ENCODE measurements at regions of chr16 and their contacts with region 1.

Region 1: DNA sequence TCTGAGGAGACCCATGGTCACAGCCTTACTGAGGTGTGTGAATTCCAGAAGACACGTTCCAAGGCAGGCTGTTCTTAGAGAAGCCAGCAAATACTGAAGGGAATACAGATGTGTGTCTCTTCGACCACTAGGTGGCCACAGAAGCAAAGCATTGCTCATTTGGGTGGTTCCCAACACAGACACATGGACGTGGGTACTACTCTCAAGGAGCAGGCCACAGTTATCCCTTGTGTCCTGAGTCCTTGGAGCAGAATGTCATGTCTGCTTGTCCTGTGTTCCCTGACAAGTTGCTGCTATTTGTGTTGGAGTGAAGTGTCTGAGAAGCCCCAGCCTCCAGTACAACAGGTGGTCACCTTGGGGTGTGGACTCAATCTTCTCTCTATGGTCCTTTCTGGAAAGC is 30.3 kb downstream of the HMOX2 start:
- DNase-seq: peak; percentile 66 to 73 (median 68)
- H3K4me3 ChIP-seq: peak overlapping the region in 1 of 2 donors; percentile 57
- H3K4me3 Mint-ChIP-seq: peak overlapping the region; percentile 49 to 94 (median 80)
- H3K27ac ChIP-seq: peak overlapping the region; percentile 77
- H3K27ac Mint-ChIP-seq: peak overlapping the region; percentile 96 to 100 (median 99)
- H3K4me1 ChIP-seq: peaks cover 67% of the 10 kb centered on the region
- H3K4me1 Mint-ChIP-seq: peaks cover 40 to 77% (median 60%) of the 10 kb centered on the region in 4 donors
- H3K27me3 ChIP-seq: no peaks in the 10 kb centered on the region
- H3K27me3 Mint-ChIP-seq: no peaks in the 10 kb centered on the region

Region 2: DNA sequence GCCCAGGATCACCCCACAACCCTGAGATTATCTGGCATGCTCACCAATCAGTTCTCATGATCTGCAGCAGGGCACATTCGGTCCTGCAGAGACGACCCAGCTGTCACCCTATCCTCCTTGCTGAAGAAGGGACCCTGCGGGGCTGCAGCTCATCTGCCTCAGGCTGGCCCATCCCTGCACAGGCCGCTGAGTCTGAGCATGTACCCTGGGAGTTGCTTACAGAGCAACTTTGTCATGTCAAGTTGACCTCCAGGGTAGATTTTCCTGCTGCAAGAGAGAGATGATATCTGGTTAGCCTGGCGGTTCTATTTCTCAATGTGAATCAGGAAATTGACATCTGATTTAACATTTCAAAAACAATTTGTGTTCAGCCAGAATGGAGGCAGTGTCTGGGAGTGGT is 354.2 kb before region 1 on chr16:
- CTCF ChIA-PET with region 1: no interaction called
- POLR2A ChIA-PET with region 1: no interaction called
- intact Hi-C with region 1: no loop called
- DNase-seq: no peak
- H3K4me3 ChIP-seq: no peak overlapping the region
- H3K4me3 Mint-ChIP-seq: no peak overlapping the region
- H3K27ac ChIP-seq: no peak overlapping the region
- H3K27ac Mint-ChIP-seq: no peak overlapping the region
- H3K4me1 ChIP-seq: no peaks in the 10 kb centered on the region
- H3K4me1 Mint-ChIP-seq: no peaks in the 10 kb centered on the region
- H3K27me3 ChIP-seq: no peaks in the 10 kb centered on the region
- H3K27me3 Mint-ChIP-seq: no peaks in the 10 kb centered on the region

Region 3: DNA sequence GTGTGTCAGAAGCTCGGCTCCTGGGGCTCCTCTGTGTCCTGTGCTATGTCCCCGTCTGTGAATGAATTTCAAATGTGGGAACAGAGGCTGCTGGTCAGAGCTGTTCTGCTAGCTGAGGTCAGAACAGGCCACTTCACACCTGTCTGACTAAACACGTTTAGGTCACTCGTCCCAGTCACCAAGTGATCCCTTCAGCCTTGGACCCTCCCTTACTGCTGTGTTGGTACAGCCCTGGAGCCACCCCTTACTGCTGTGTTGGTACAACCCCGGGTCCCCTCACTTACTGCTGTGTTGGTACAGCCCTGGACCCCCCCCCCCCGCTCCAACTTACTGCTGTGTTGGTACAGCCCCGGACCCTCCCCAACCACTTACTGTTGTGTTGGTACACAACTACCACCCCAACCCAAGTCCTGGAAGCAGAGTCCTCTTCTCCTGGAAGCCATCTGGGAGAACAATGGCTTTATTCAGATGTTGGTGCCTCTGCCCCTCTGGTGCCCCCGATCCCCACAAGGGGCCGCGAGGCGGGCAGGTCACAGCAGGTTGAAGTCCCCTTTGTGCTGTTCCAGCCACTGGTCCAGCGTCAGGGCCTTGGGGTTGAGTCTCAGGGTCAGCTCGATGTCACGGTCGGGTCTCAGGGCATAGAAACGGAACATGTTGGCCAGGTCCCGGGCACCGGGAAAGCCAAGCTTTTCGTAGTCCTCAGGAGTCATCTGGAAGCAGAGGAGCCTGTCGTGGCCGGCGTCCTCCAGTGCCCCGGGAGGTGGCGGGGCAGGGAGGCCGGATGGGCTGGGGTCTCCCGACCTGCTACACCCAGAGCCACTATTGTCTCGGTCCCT is 45.0 kb before region 1 on chr16:
- CTCF ChIA-PET with region 1: interaction called, 11 read pairs
- POLR2A ChIA-PET with region 1: interaction called, 24 read pairs
- intact Hi-C with region 1: no loop called
- DNase-seq: no peak
- H3K4me3 ChIP-seq: no peak overlapping the region
- H3K4me3 Mint-ChIP-seq: no peak overlapping the region
- H3K27ac ChIP-seq: no peak overlapping the region
- H3K27ac Mint-ChIP-seq: peak overlapping the region in 4 of 7 donors; percentile 42 to 85 (median 54)
- H3K4me1 ChIP-seq: peaks cover 31% of the 10 kb centered on the region
- H3K4me1 Mint-ChIP-seq: peaks cover 21 to 43% (median 21%) of the 10 kb centered on the region in 4 donors
- H3K27me3 ChIP-seq: no peaks in the 10 kb centered on the region
- H3K27me3 Mint-ChIP-seq: no peaks in the 10 kb centered on the region

Region 4: DNA sequence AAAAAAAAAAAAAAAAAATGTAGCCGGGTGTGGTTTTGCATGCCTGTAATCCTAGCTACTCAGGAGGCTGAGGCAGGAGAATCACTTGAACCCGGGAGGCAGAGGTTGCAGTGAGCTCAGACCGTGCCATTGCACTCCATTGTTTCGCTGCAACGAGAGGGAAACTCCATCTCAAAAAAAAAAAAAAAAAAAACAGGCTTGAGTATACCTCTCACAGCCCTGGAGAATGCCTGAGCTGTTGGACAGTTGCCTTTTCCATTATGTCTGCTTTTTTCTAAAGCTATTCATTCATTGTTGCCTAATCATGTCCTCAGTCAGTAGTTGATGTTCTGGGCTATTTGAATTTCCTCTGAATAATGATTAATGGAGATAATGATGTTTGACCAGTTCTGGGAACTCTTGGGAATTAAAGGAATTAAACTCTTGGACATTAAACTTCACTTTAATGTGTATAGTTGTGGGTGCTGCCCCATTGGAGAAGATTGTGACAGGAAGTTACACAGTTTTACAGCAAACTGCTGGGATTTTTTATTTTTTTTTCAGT is 18.4 kb before region 1 on chr16:
- CTCF ChIA-PET with region 1: interaction called, 343 read pairs
- POLR2A ChIA-PET with region 1: interaction called, 150 read pairs
- intact Hi-C with region 1: loop called (anchors 1 kb)
- DNase-seq: peak in 3 of 5 donors; percentile 40 to 54 (median 42)
- H3K4me3 ChIP-seq: peak overlapping the region in 1 of 2 donors; percentile 33
- H3K4me3 Mint-ChIP-seq: peak overlapping the region; percentile 56 to 91 (median 81)
- H3K27ac ChIP-seq: peak overlapping the region; percentile 50
- H3K27ac Mint-ChIP-seq: peak overlapping the region; percentile 81 to 98 (median 97)
- H3K4me1 ChIP-seq: peaks cover 84% of the 10 kb centered on the region
- H3K4me1 Mint-ChIP-seq: peaks cover 36 to 70% (median 57%) of the 10 kb centered on the region in 4 donors
- H3K27me3 ChIP-seq: no peaks in the 10 kb centered on the region
- H3K27me3 Mint-ChIP-seq: no peaks in the 10 kb centered on the region

Region 5: GRCh38 chr16:4550591-4550990 is 44.1 kb after region 1 on chr16:
- CTCF ChIA-PET with region 1: interaction called, 203 read pairs
- POLR2A ChIA-PET with region 1: interaction called, 10 read pairs
- intact Hi-C with region 1: loop called (anchors 1 kb)
- DNase-seq: no peak
- H3K4me3 ChIP-seq: no peak overlapping the region
- H3K4me3 Mint-ChIP-seq: no peak overlapping the region
- H3K27ac ChIP-seq: no peak overlapping the region
- H3K27ac Mint-ChIP-seq: peak overlapping the region in 2 of 7 donors; percentile 46 to 88
- H3K4me1 ChIP-seq: peaks cover 6% of the 10 kb centered on the region
- H3K4me1 Mint-ChIP-seq: peaks cover 4 to 7% (median 5%) of the 10 kb centered on the region in 4 donors
- H3K27me3 ChIP-seq: no peaks in the 10 kb centered on the region
- H3K27me3 Mint-ChIP-seq: no peaks in the 10 kb centered on the region

Region 6: GRCh38 chr16:4616047-4616811 is 109.8 kb after region 1 on chr16:
- CTCF ChIA-PET with region 1: interaction called, 8 read pairs
- POLR2A ChIA-PET with region 1: interaction called, 17 read pairs
- intact Hi-C with region 1: loop called (anchors 2 kb)
- DNase-seq: peak; percentile 98 to 100 (median 99)
- H3K4me3 ChIP-seq: peak overlapping the region; percentile 65 to 79
- H3K4me3 Mint-ChIP-seq: peak overlapping the region; percentile 94 to 97 (median 95)
- H3K27ac ChIP-seq: peak overlapping the region; percentile 89
- H3K27ac Mint-ChIP-seq: peak overlapping the region; percentile 95 to 100 (median 99)
- H3K4me1 ChIP-seq: peaks cover 43% of the 10 kb centered on the region
- H3K4me1 Mint-ChIP-seq: peaks cover 5 to 39% (median 25%) of the 10 kb centered on the region in 4 donors
- H3K27me3 ChIP-seq: no peaks in the 10 kb centered on the region
- H3K27me3 Mint-ChIP-seq: no peaks in the 10 kb centered on the region

Region 7: GRCh38 chr16:4675864-4676786 is 169.7 kb after region 1 on chr16:
- CTCF ChIA-PET with region 1: no interaction called
- POLR2A ChIA-PET with region 1: no interaction called
- intact Hi-C with region 1: no loop called
- DNase-seq: peak; percentile 72 to 83 (median 80)
- H3K4me3 ChIP-seq: no peak overlapping the region
- H3K4me3 Mint-ChIP-seq: peak overlapping the region; percentile 54 to 87 (median 76)
- H3K27ac ChIP-seq: peak overlapping the region; percentile 65
- H3K27ac Mint-ChIP-seq: peak overlapping the region; percentile 95 to 99 (median 98)
- H3K4me1 ChIP-seq: peaks cover 23% of the 10 kb centered on the region
- H3K4me1 Mint-ChIP-seq: peaks cover 15 to 29% (median 23%) of the 10 kb centered on the region in 4 donors
- H3K27me3 ChIP-seq: no peaks in the 10 kb centered on the region
- H3K27me3 Mint-ChIP-seq: no peaks in the 10 kb centered on the region

Measured in CD4-positive, alpha-beta memory T cell (primary cell).